ENCODE measurements at regions of chr12 and their contacts with region 1.

Region 1: GRCh38 chr12:24778486-24779304 is 170.2 kb downstream of the BCAT1 start:
- DNase-seq: peak; percentile 61
- ATAC-seq: peak; percentile 67
- H3K4me3 ChIP-seq: no peak overlapping the region
- H3K4me3 Mint-ChIP-seq: no peak overlapping the region
- H3K27ac ChIP-seq: no peak overlapping the region
- H3K27ac Mint-ChIP-seq: no peak overlapping the region
- H3K4me1 ChIP-seq: no peaks in the 10 kb centered on the region
- H3K4me1 Mint-ChIP-seq: no peaks in the 10 kb centered on the region
- H3K27me3 ChIP-seq: no peaks in the 10 kb centered on the region
- H3K27me3 Mint-ChIP-seq: peaks cover 4% of the 10 kb centered on the region
- CTCF ChIP-seq: peak; percentile 70

Region 2: DNA sequence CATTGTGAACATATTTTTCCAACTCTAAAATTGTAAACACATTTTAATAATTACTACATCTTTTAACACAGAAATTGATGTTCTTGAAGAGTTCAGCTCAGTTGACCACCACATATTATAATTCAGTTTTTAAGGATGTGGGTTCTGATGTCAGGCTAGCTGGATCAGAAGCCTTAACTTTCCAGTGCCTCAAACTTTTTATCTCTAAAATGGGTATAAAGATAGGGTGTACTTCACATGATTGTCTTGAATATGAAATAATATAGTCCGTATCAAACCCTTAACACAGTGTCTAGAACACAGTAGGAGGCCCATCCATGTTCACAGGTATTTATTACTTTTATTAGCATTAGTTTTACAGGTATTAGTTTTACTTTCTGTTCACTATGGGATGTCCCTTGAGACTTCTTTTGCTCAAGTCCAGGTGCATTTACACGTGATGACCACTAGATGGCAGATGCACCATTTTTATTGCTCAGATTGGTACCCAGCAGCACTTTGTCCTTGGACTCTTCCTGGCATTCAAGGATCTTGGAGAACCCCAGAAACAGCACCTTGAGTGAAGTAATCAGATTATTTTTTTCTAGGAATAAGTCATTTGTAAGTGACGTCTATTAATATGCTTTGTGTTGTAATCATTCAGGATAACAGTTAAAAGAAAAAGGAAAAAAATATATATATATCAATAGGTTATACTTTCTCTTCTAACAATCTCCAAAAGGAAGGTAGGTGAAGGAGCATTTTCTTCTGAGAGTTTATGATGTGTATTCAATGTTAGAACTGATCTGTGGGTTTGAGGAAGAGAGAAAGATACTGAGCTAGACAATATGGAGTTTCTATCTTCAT is 1573.5 kb before region 1 on chr12:
- CTCF ChIA-PET with region 1: interaction called, 35 read pairs
- POLR2A ChIA-PET with region 1: no interaction called
- intact Hi-C with region 1: no loop called
- DNase-seq: peak; percentile 71
- ATAC-seq: peak; percentile 89
- H3K4me3 ChIP-seq: no peak overlapping the region
- H3K4me3 Mint-ChIP-seq: no peak overlapping the region
- H3K27ac ChIP-seq: no peak overlapping the region
- H3K27ac Mint-ChIP-seq: no peak overlapping the region
- H3K4me1 ChIP-seq: no peaks in the 10 kb centered on the region
- H3K4me1 Mint-ChIP-seq: no peaks in the 10 kb centered on the region
- H3K27me3 ChIP-seq: no peaks in the 10 kb centered on the region
- H3K27me3 Mint-ChIP-seq: peaks cover 22% of the 10 kb centered on the region
- CTCF ChIP-seq: peak; percentile 96

Region 3: GRCh38 chr12:24278832-24279231 is 499.9 kb before region 1 on chr12:
- CTCF ChIA-PET with region 1: no interaction called
- POLR2A ChIA-PET with region 1: no interaction called
- intact Hi-C with region 1: loop called (anchors 10 kb)
- DNase-seq: no peak
- ATAC-seq: no peak
- H3K4me3 ChIP-seq: no peak overlapping the region
- H3K4me3 Mint-ChIP-seq: no peak overlapping the region
- H3K27ac ChIP-seq: no peak overlapping the region
- H3K27ac Mint-ChIP-seq: no peak overlapping the region
- H3K4me1 ChIP-seq: no peaks in the 10 kb centered on the region
- H3K4me1 Mint-ChIP-seq: peaks cover 2% of the 10 kb centered on the region
- H3K27me3 ChIP-seq: no peaks in the 10 kb centered on the region
- H3K27me3 Mint-ChIP-seq: no peaks in the 10 kb centered on the region
- CTCF ChIP-seq: no peak

Region 4: DNA sequence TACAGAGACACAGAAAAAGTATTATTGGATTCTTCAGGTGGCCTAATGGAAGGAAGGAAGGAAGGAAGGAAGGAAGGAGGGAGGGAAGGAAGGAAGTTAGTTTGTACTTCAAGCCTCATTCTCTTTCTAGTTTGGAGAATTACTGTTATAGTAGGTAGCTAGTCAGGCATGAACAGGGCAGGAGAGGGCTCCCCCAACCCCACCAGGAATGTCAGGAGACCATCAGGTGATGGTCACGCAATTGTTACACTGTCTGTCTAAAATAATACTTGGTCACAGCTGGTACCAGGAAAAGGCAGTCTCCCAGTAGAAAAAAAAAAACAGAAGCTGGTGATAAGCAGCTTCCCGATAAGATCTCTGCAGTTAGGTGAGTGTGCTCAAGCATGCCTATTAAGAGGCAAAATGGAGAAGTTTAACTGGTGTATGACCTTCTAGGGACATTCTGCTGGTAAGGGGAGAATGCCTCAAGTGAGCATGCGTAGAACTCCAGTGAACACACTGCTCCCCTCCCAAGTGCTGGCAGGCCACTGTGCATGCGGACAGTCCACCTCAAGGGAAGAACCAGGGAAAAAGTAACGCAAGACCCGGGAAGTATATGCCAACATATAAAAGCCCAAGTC is 470.9 kb before region 1 on chr12:
- CTCF ChIA-PET with region 1: no interaction called
- POLR2A ChIA-PET with region 1: no interaction called
- intact Hi-C with region 1: no loop called
- DNase-seq: peak; percentile 16
- ATAC-seq: peak; percentile 47
- H3K4me3 ChIP-seq: no peak overlapping the region
- H3K4me3 Mint-ChIP-seq: no peak overlapping the region
- H3K27ac ChIP-seq: no peak overlapping the region
- H3K27ac Mint-ChIP-seq: peak overlapping the region; percentile 33
- H3K4me1 ChIP-seq: peaks cover 7% of the 10 kb centered on the region in 2 donors
- H3K4me1 Mint-ChIP-seq: peaks cover 14% of the 10 kb centered on the region
- H3K27me3 ChIP-seq: no peaks in the 10 kb centered on the region
- H3K27me3 Mint-ChIP-seq: no peaks in the 10 kb centered on the region
- CTCF ChIP-seq: no peak

Region 5: GRCh38 chr12:24728366-24728765 is 50.3 kb before region 1 on chr12:
- CTCF ChIA-PET with region 1: interaction called, 11 read pairs
- POLR2A ChIA-PET with region 1: no interaction called
- intact Hi-C with region 1: no loop called
- DNase-seq: peak; percentile 50
- ATAC-seq: no peak
- H3K4me3 ChIP-seq: no peak overlapping the region
- H3K4me3 Mint-ChIP-seq: peak overlapping the region; percentile 17
- H3K27ac ChIP-seq: no peak overlapping the region
- H3K27ac Mint-ChIP-seq: no peak overlapping the region
- H3K4me1 ChIP-seq: peaks cover 22 to 23% of the 10 kb centered on the region in 2 donors
- H3K4me1 Mint-ChIP-seq: peaks cover 57% of the 10 kb centered on the region
- H3K27me3 ChIP-seq: no peaks in the 10 kb centered on the region
- H3K27me3 Mint-ChIP-seq: no peaks in the 10 kb centered on the region
- CTCF ChIP-seq: peak; percentile 76

Region 6: DNA sequence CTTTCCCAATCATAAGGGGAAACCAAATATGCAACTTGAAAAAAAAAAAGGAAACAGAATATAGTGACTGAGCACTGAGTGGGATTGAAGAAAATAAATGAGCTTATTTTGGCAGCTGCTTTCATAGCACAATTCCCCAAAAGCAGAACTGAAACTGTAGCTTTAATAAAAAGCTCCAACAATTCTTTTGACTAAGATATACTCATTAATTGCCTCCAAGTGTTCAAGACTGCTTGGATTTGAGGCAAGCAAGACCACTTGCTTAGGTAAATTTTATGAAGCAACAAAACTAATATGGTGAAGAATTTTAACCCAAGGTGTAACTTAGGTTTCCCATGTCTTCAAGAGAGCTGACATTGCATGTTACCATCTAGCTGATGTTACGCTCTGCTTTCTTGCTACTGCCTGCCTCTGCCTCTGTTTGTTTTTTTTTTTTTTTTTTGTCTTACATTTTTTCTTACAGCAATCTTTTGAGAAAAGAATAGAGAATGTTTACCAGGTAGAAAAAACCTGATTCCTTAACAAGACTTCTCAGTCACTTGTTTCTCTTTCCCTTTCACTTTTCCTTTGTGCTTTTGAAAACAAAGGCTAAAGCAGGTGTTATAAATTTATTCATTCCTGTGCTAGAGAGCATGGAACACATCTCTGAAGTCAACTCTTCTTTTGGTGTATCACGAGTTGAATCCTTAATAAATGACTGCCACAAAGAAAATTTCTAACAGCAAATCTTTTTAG is 35.9 kb after region 1 on chr12:
- CTCF ChIA-PET with region 1: interaction called, 10 read pairs
- POLR2A ChIA-PET with region 1: no interaction called
- intact Hi-C with region 1: no loop called
- DNase-seq: peak; percentile 75
- ATAC-seq: peak; percentile 86
- H3K4me3 ChIP-seq: peak overlapping the region; percentile 33 to 70 (median 51)
- H3K4me3 Mint-ChIP-seq: peak overlapping the region; percentile 84
- H3K27ac ChIP-seq: peak overlapping the region; percentile 48 to 67
- H3K27ac Mint-ChIP-seq: peak overlapping the region; percentile 85
- H3K4me1 ChIP-seq: peaks cover 5 to 16% of the 10 kb centered on the region in 2 donors
- H3K4me1 Mint-ChIP-seq: peaks cover 32% of the 10 kb centered on the region
- H3K27me3 ChIP-seq: no peaks in the 10 kb centered on the region
- H3K27me3 Mint-ChIP-seq: no peaks in the 10 kb centered on the region
- CTCF ChIP-seq: no peak

Measured in B cell (primary cell).